Natural killer cell (primary cell): ENCODE measurements at regions of chr17 and their contacts with region 1.

Region 1: GRCh38 chr17:64262417-64263260 is at the start of gene TEX2:
- DNase-seq: peak; percentile 52 to 83
- ATAC-seq: peak; percentile 38 to 58 (median 39)
- H3K4me3 ChIP-seq: peak within 1 kb of the TSS; percentile 82
- H3K4me3 Mint-ChIP-seq: peak within 1 kb of the TSS; percentile 95
- H3K27ac ChIP-seq: peak within 1 kb of the TSS; percentile 75
- H3K27ac Mint-ChIP-seq: peak within 1 kb of the TSS; percentile 87 to 93
- H3K4me1 ChIP-seq: peaks cover 20% of the 10 kb centered on the region
- H3K4me1 Mint-ChIP-seq: peaks cover 30 to 33% of the 10 kb centered on the region in 2 donors
- H3K27me3 ChIP-seq: no peaks in the 10 kb centered on the region
- H3K27me3 Mint-ChIP-seq: peaks cover 0 to 4% of the 10 kb centered on the region in 2 donors
- CTCF ChIP-seq: no peak
- total RNA-seq, gene TEX2: 8.3 to 16.3 (median 11.3) TPM

Region 2: GRCh38 chr17:64145757-64146417 is 116.8 kb before region 1 on chr17:
- intact Hi-C with region 1: loop called (anchors 1 kb)
- DNase-seq: peak; percentile 86 to 98
- ATAC-seq: peak; percentile 94 to 100 (median 97)
- H3K4me3 ChIP-seq: peak overlapping the region; percentile 62
- H3K4me3 Mint-ChIP-seq: no peak overlapping the region
- H3K27ac ChIP-seq: peak overlapping the region; percentile 87
- H3K27ac Mint-ChIP-seq: no peak overlapping the region
- H3K4me1 ChIP-seq: peaks cover 20% of the 10 kb centered on the region
- H3K4me1 Mint-ChIP-seq: peaks cover 0 to 8% of the 10 kb centered on the region in 2 donors
- H3K27me3 ChIP-seq: no peaks in the 10 kb centered on the region
- H3K27me3 Mint-ChIP-seq: no peaks in the 10 kb centered on the region
- CTCF ChIP-seq: no peak